CD8-positive, alpha-beta T cell (primary cell): ENCODE measurements at regions of chr2 and their contacts with region 1.

Region 1: DNA sequence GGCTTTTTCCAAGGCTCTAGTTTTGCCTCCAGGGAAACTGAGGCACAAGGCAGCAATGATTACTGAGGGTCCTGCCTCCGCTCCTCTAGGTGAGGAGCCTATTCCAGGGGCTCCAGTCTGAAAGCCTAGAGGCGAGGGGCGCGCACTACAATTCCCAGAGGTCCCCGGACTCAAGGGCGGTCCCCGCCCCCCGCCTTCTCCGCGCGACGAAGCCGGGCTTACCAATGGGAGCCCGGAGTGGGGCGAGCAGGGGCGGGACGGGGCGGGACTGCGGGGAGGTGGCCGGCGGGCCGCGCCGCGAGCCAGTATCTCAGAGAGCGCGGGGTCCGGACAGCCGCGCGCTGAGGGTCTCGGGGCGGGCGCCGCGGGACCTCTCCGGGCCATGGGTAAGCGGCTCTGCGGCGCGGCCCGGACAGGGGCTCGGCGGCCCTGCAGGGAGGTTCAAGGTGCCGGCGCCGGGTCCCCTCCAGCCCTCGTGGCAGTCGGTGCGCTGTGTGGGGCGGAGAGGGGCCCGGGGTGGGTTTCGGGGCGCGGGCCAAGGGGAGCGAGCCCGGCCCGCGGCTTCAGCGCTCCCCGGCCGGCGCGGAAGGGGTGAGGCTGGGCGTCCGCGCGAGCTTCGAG is at the start of gene ARID5A:
- DNase-seq: peak; percentile 84 to 95 (median 92)
- ATAC-seq: peak; percentile 48
- H3K4me3 ChIP-seq: peak within 1 kb of the TSS; percentile 81
- H3K4me3 Mint-ChIP-seq: peak within 1 kb of the TSS; percentile 98
- H3K27ac ChIP-seq: peak within 1 kb of the TSS; percentile 93 to 97
- H3K27ac Mint-ChIP-seq: peak within 1 kb of the TSS; percentile 100
- H3K4me1 ChIP-seq: peaks cover 43% of the 10 kb centered on the region
- H3K4me1 Mint-ChIP-seq: peaks cover 43% of the 10 kb centered on the region
- H3K27me3 ChIP-seq: no peaks in the 10 kb centered on the region
- H3K27me3 Mint-ChIP-seq: no peaks in the 10 kb centered on the region
- CTCF ChIP-seq: peak; percentile 48
- total RNA-seq, gene ARID5A: 408 to 413 TPM

Region 2: GRCh38 chr2:96145036-96145847 is 391.3 kb before region 1 on chr2 and contains the start of gene DUSP2:
- CTCF ChIA-PET with region 1: no interaction called
- POLR2A ChIA-PET with region 1: interaction called, 3 read pairs
- intact Hi-C with region 1: loop called (anchors 1 to 5 kb)
- DNase-seq: peak; percentile 80 to 97 (median 91)
- ATAC-seq: peak; percentile 37
- H3K4me3 ChIP-seq: peak within 1 kb of the TSS; percentile 91 to 96
- H3K4me3 Mint-ChIP-seq: peak within 1 kb of the TSS; percentile 94
- H3K27ac ChIP-seq: peak within 1 kb of the TSS; percentile 98 to 99
- H3K27ac Mint-ChIP-seq: peak within 1 kb of the TSS; percentile 94
- H3K4me1 ChIP-seq: peaks cover 61% of the 10 kb centered on the region
- H3K4me1 Mint-ChIP-seq: peaks cover 57% of the 10 kb centered on the region
- H3K27me3 ChIP-seq: no peaks in the 10 kb centered on the region
- H3K27me3 Mint-ChIP-seq: no peaks in the 10 kb centered on the region
- CTCF ChIP-seq: no peak
- total RNA-seq, gene DUSP2: 1,304 to 1,350 TPM

Region 3: DNA sequence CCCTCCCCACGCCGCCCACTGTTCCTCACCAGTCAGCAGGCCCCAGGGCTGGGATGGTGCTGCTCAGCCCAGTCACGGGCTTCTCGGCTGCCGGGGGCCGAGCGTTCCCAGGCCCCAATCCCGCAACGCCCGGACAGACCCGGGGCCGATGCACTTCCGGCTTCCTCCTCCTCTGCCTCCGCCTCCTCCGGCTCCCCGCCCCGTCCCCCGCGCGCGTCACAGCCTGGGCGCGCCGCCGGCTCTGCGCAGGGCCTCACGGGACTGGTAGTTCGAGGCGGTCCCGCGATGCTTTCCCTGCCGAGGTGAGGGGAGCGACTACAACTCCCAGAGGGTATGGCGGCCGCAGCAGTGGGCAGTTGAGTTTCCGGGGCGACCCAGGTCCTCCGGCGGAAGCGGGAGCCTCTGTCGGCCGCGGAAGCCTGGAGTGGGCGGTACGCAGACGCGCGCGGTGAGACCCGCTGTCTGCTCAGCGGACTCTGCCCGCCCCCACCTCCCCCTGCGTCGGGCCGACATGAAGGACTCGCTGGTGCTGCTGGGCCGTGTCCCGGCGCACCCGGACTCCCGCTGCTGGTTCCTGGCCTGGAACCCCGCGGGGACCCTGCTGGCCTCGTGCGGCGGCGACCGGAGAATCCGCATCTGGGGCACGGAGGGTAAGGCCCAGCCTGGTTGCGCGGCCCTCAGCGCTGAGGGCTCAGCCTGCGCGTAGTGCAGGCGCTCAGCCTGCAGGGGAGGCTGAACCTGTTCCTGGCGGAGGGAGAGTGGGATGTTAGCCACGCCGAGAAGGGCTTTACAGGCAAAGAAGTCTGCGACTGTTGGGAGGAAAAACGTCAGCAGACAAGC is 270.5 kb before region 1 on chr2 and contains the starts of genes CIAO1 and TMEM127:
- CTCF ChIA-PET with region 1: no interaction called
- POLR2A ChIA-PET with region 1: no interaction called
- intact Hi-C with region 1: loop called in 1 of 2 experiments (anchors 1 kb)
- DNase-seq: peak; percentile 96 to 99 (median 97)
- ATAC-seq: peak; percentile 93
- H3K4me3 ChIP-seq: peak within 1 kb of the TSS; percentile 88 to 99
- H3K4me3 Mint-ChIP-seq: peak within 1 kb of the TSS; percentile 89
- H3K27ac ChIP-seq: peak within 1 kb of the TSS; percentile 93 to 97
- H3K27ac Mint-ChIP-seq: peak within 1 kb of the TSS; percentile 86
- H3K4me1 ChIP-seq: peaks cover 39% of the 10 kb centered on the region
- H3K4me1 Mint-ChIP-seq: peaks cover 45% of the 10 kb centered on the region
- H3K27me3 ChIP-seq: no peaks in the 10 kb centered on the region
- H3K27me3 Mint-ChIP-seq: no peaks in the 10 kb centered on the region
- CTCF ChIP-seq: no peak
- total RNA-seq, gene CIAO1: 51.9 to 58.0 TPM
- total RNA-seq, gene TMEM127: 44.7 to 49.6 TPM

Region 4: GRCh38 chr2:96407041-96407918 is 129.3 kb before region 1 on chr2:
- CTCF ChIA-PET with region 1: interaction called, 8 read pairs
- POLR2A ChIA-PET with region 1: interaction called, 39 read pairs
- intact Hi-C with region 1: no loop called
- DNase-seq: peak; percentile 55 to 94 (median 79)
- ATAC-seq: peak; percentile 93
- H3K4me3 ChIP-seq: peak overlapping the region in 1 of 2 experiments; percentile 33
- H3K4me3 Mint-ChIP-seq: peak overlapping the region; percentile 72
- H3K27ac ChIP-seq: peak overlapping the region; percentile 48 to 58
- H3K27ac Mint-ChIP-seq: peak overlapping the region; percentile 97
- H3K4me1 ChIP-seq: peaks cover 36% of the 10 kb centered on the region
- H3K4me1 Mint-ChIP-seq: peaks cover 51% of the 10 kb centered on the region
- H3K27me3 ChIP-seq: no peaks in the 10 kb centered on the region
- H3K27me3 Mint-ChIP-seq: no peaks in the 10 kb centered on the region
- CTCF ChIP-seq: peak; percentile 71

Region 5: GRCh38 chr2:96554293-96555145 is 18.0 kb after region 1 on chr2:
- CTCF ChIA-PET with region 1: interaction called, 149 read pairs
- POLR2A ChIA-PET with region 1: interaction called, 61 read pairs
- intact Hi-C with region 1: loop called (anchors 1 kb)
- DNase-seq: peak; percentile 46 to 86 (median 71)
- ATAC-seq: peak; percentile 60
- H3K4me3 ChIP-seq: peak overlapping the region in 1 of 2 experiments; percentile 1
- H3K4me3 Mint-ChIP-seq: peak overlapping the region; percentile 29
- H3K27ac ChIP-seq: no peak overlapping the region
- H3K27ac Mint-ChIP-seq: peak overlapping the region; percentile 62
- H3K4me1 ChIP-seq: peaks cover 16% of the 10 kb centered on the region
- H3K4me1 Mint-ChIP-seq: peaks cover 17% of the 10 kb centered on the region
- H3K27me3 ChIP-seq: no peaks in the 10 kb centered on the region
- H3K27me3 Mint-ChIP-seq: no peaks in the 10 kb centered on the region
- CTCF ChIP-seq: peak; percentile 86

Region 6: DNA sequence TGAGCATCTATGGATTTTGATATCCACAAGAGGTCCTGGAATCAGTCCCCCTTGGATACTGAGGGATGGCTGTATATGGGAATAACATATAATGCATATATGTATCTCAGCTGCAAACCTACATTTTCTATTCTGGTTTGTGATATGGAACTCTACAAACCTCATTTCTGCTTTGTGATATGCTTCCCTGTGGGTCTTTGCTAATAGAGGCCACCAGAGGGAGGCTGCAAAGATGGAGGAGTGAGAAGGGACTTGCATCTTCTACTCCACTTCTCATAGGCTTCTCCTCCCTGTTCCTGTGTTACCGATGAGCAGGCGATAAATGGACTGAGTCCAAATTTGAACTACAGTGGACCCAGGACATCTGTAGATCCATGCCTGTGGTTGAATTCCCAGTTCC is 37.8 kb after region 1 on chr2:
- CTCF ChIA-PET with region 1: no interaction called
- POLR2A ChIA-PET with region 1: no interaction called
- intact Hi-C with region 1: no loop called
- DNase-seq: no peak
- ATAC-seq: no peak
- H3K4me3 ChIP-seq: no peak overlapping the region
- H3K4me3 Mint-ChIP-seq: no peak overlapping the region
- H3K27ac ChIP-seq: no peak overlapping the region
- H3K27ac Mint-ChIP-seq: no peak overlapping the region
- H3K4me1 ChIP-seq: no peaks in the 10 kb centered on the region
- H3K4me1 Mint-ChIP-seq: no peaks in the 10 kb centered on the region
- H3K27me3 ChIP-seq: no peaks in the 10 kb centered on the region
- H3K27me3 Mint-ChIP-seq: no peaks in the 10 kb centered on the region
- CTCF ChIP-seq: no peak

Region 7: DNA sequence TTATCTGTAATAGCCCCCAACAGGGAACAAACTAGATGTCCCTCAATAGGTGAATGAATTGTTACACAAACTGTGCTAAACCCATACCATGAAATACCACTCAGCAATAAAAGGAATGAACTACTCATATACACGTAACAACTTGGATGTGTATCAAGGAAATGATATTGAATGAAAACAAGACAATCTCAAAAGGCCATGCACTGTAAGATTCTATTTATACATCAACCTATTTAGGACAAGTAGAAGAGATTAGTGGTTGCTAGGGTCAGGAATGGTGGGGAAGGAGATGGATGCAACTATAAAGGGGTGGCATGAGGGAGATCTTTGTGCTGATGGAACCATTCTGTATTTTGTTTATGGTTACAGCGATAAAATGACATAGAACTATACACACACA is 54.5 kb after region 1 on chr2:
- CTCF ChIA-PET with region 1: no interaction called
- POLR2A ChIA-PET with region 1: no interaction called
- intact Hi-C with region 1: no loop called
- DNase-seq: no peak
- ATAC-seq: no peak
- H3K4me3 ChIP-seq: no peak overlapping the region
- H3K4me3 Mint-ChIP-seq: no peak overlapping the region
- H3K27ac ChIP-seq: no peak overlapping the region
- H3K27ac Mint-ChIP-seq: peak overlapping the region; percentile 19
- H3K4me1 ChIP-seq: peaks cover 24% of the 10 kb centered on the region
- H3K4me1 Mint-ChIP-seq: peaks cover 30% of the 10 kb centered on the region
- H3K27me3 ChIP-seq: no peaks in the 10 kb centered on the region
- H3K27me3 Mint-ChIP-seq: no peaks in the 10 kb centered on the region
- CTCF ChIP-seq: no peak

Region 8: GRCh38 chr2:96816128-96816835 is 279.7 kb after region 1 on chr2 and contains the start of gene CNNM3:
- CTCF ChIA-PET with region 1: no interaction called
- POLR2A ChIA-PET with region 1: interaction called, 9 read pairs
- intact Hi-C with region 1: loop called in 1 of 2 experiments (anchors 5 kb)
- DNase-seq: peak; percentile 90 to 98 (median 96)
- ATAC-seq: peak; percentile 92
- H3K4me3 ChIP-seq: peak within 1 kb of the TSS; percentile 70 to 83
- H3K4me3 Mint-ChIP-seq: peak within 1 kb of the TSS; percentile 87
- H3K27ac ChIP-seq: peak within 1 kb of the TSS; percentile 57 to 70
- H3K27ac Mint-ChIP-seq: peak within 1 kb of the TSS; percentile 90
- H3K4me1 ChIP-seq: peaks cover 48% of the 10 kb centered on the region
- H3K4me1 Mint-ChIP-seq: peaks cover 63% of the 10 kb centered on the region
- H3K27me3 ChIP-seq: no peaks in the 10 kb centered on the region
- H3K27me3 Mint-ChIP-seq: no peaks in the 10 kb centered on the region
- CTCF ChIP-seq: peak; percentile 63
- total RNA-seq, gene CNNM3: 40.1 to 41.8 TPM